ENCODE measurements at regions of chr22 and their contacts with region 1.

Region 1: GRCh38 chr22:50469377-50470305 is 5.2 kb downstream of the SBF1 start:
- DNase-seq: peak; percentile 77 to 96 (median 92)
- ATAC-seq: peak; percentile 95
- H3K4me3 ChIP-seq: peak overlapping the region; percentile 65
- H3K4me3 Mint-ChIP-seq: peak overlapping the region; percentile 76 to 100 (median 90)
- H3K27ac ChIP-seq: peak overlapping the region; percentile 90
- H3K27ac Mint-ChIP-seq: peak overlapping the region; percentile 88 to 99 (median 93)
- H3K4me1 ChIP-seq: peaks cover 53 to 57% of the 10 kb centered on the region in 2 donors
- H3K4me1 Mint-ChIP-seq: peaks cover 45 to 69% (median 61%) of the 10 kb centered on the region in 7 donors
- H3K27me3 ChIP-seq: no peaks in the 10 kb centered on the region
- H3K27me3 Mint-ChIP-seq: no peaks in the 10 kb centered on the region

Region 2: DNA sequence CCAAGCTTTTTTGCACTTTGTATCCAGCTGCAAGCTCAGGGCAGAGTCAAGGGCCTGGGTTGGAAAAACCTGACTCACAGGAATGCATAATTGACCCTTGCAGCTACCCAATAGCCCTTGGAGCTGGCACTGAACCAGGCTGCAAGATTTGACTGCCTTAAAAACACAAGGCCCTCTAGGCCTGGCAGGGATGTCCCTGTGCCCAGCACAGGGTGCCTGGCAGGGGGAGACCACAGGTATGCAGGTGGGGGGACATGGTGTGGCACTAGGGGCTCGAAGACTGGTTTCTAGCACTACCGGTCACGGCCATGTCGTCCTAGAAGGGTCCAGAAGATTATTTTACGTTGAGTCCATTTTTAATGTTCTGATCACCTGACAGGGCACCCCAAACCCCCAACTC is 25.0 kb before region 1 on chr22:
- CTCF ChIA-PET with region 1: no interaction called
- POLR2A ChIA-PET with region 1: interaction called, 4 read pairs
- intact Hi-C with region 1: loop called in 1 of 2 experiments (anchors 2 kb)
- DNase-seq: no peak
- ATAC-seq: no peak
- H3K4me3 ChIP-seq: no peak overlapping the region
- H3K4me3 Mint-ChIP-seq: peak overlapping the region in 1 of 10 donors; percentile 69
- H3K27ac ChIP-seq: peak overlapping the region; percentile 55
- H3K27ac Mint-ChIP-seq: peak overlapping the region in 8 of 9 donors; percentile 32 to 84 (median 68)
- H3K4me1 ChIP-seq: peaks cover 9 to 20% of the 10 kb centered on the region in 2 donors
- H3K4me1 Mint-ChIP-seq: peaks cover 0 to 25% (median 19%) of the 10 kb centered on the region in 7 donors
- H3K27me3 ChIP-seq: no peaks in the 10 kb centered on the region
- H3K27me3 Mint-ChIP-seq: no peaks in the 10 kb centered on the region

Region 3: GRCh38 chr22:50456466-50457234 is 13.0 kb before region 1 on chr22:
- CTCF ChIA-PET with region 1: interaction called, 6 read pairs
- POLR2A ChIA-PET with region 1: interaction called, 8 read pairs
- intact Hi-C with region 1: loop called in 1 of 2 experiments (anchors 2 kb)
- DNase-seq: no peak
- ATAC-seq: peak; percentile 38
- H3K4me3 ChIP-seq: no peak overlapping the region
- H3K4me3 Mint-ChIP-seq: no peak overlapping the region
- H3K27ac ChIP-seq: no peak overlapping the region
- H3K27ac Mint-ChIP-seq: peak overlapping the region in 4 of 9 donors; percentile 19 to 71 (median 28)
- H3K4me1 ChIP-seq: no peaks in the 10 kb centered on the region
- H3K4me1 Mint-ChIP-seq: peaks cover 0 to 8% (median 0%) of the 10 kb centered on the region in 7 donors
- H3K27me3 ChIP-seq: no peaks in the 10 kb centered on the region
- H3K27me3 Mint-ChIP-seq: no peaks in the 10 kb centered on the region

Region 4: GRCh38 chr22:50481440-50482106 is 11.9 kb after region 1 on chr22 and contains the start of gene ADM2:
- CTCF ChIA-PET with region 1: interaction called, 3 read pairs
- POLR2A ChIA-PET with region 1: interaction called, 11 read pairs
- intact Hi-C with region 1: loop called in 1 of 2 experiments (anchors 1 kb)
- DNase-seq: peak; percentile 36 to 79 (median 59)
- ATAC-seq: peak; percentile 86
- H3K4me3 ChIP-seq: peak within 1 kb of the TSS; percentile 39
- H3K4me3 Mint-ChIP-seq: peak within 1 kb of the TSS; percentile 58 to 85 (median 78)
- H3K27ac ChIP-seq: peak within 1 kb of the TSS; percentile 45
- H3K27ac Mint-ChIP-seq: peak within 1 kb of the TSS in 6 of 9 donors; percentile 20 to 78 (median 61)
- H3K4me1 ChIP-seq: peaks cover 4 to 8% of the 10 kb centered on the region in 2 donors
- H3K4me1 Mint-ChIP-seq: peaks cover 0 to 18% (median 7%) of the 10 kb centered on the region in 7 donors
- H3K27me3 ChIP-seq: no peaks in the 10 kb centered on the region
- H3K27me3 Mint-ChIP-seq: peaks cover 0 to 28% (median 0%) of the 10 kb centered on the region in 5 donors
- total RNA-seq, gene ADM2: 1.3 to 4.5 (median 4.0) TPM

Measured in naive thymus-derived CD4-positive, alpha-beta T cell (primary cell).